Panc1 (cell line): ENCODE measurements at regions of chr13 and their contacts with region 1.

Region 1: DNA sequence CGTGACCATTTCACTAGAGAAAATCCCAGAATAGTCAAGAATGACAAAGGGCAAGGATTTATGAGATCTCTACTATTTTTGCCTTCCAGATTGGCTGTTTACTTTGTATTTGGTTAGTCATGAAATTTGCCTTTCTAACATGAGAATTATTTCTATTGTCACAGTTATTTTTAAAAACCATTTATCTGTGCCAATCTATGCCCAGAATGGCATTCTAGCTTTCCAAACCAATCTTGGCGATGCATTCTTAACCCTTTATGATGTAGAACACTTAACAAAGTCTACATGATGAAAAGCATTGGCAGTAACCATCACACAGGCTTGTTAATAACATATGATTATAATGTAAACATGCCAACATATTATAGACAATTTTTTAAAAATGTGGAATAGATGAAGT is 65.2 kb downstream of the SCEL start:
- DNase-seq: no peak
- ATAC-seq: no peak
- H3K4me3 ChIP-seq: no peak overlapping the region
- H3K27ac ChIP-seq: no peak overlapping the region
- H3K4me1 ChIP-seq: no peaks in the 10 kb centered on the region
- H3K27me3 ChIP-seq: no peaks in the 10 kb centered on the region
- CTCF ChIP-seq: no peak

Region 2: GRCh38 chr13:77033717-77034302 is 566.9 kb before region 1 on chr13:
- CTCF ChIA-PET with region 1: no interaction called
- POLR2A ChIA-PET with region 1: interaction called, 10 read pairs
- in situ Hi-C with region 1: no loop called
- intact Hi-C with region 1: no loop called
- DNase-seq: no peak
- ATAC-seq: no peak
- H3K4me3 ChIP-seq: no peak overlapping the region
- H3K27ac ChIP-seq: no peak overlapping the region
- H3K4me1 ChIP-seq: no peaks in the 10 kb centered on the region
- H3K27me3 ChIP-seq: no peaks in the 10 kb centered on the region
- CTCF ChIP-seq: no peak